ENCODE measurements at regions of chr21 and their contacts with region 1.

Region 1: DNA sequence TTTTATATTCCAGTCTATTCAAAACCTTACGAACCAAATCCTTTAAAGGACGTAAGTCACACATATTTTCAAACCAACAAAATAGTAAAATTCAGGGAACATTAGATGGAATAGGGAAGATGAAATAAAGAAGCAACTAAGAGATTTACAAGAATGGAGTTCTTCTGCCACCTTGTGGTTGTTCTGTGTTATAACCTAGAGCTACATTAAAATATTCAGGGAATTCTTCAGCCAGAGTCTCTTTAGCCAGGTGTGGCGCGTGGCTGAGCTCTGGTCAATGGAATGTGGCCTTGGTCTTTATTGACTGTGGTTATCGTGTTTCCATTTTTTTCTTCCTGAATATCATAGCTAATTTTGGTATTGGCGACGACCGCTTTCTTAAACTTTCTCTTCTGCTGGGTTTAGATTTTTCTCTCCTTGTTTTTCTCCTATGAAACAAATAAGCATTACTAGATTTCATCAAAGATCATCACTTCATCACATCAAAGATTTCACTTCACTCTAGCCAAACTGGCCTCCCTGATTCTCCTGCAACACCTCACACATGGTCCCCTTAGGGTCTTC is 221.3 kb downstream of the MRPL39 start:
- DNase-seq: peak; percentile 59
- H3K4me3 ChIP-seq: no peak overlapping the region
- H3K27ac ChIP-seq: no peak overlapping the region
- H3K4me1 ChIP-seq: no peaks in the 10 kb centered on the region
- H3K27me3 ChIP-seq: no peaks in the 10 kb centered on the region
- CTCF ChIP-seq: peak; percentile 74

Region 2: GRCh38 chr21:23853796-23854379 is 1532.1 kb before region 1 on chr21:
- CTCF ChIA-PET with region 1: no interaction called
- POLR2A ChIA-PET with region 1: no interaction called
- intact Hi-C with region 1: loop called (anchors 10 kb)
- DNase-seq: peak; percentile 2
- H3K4me3 ChIP-seq: no peak overlapping the region
- H3K27ac ChIP-seq: no peak overlapping the region
- H3K4me1 ChIP-seq: no peaks in the 10 kb centered on the region
- H3K27me3 ChIP-seq: no peaks in the 10 kb centered on the region
- CTCF ChIP-seq: peak; percentile 49

Region 3: DNA sequence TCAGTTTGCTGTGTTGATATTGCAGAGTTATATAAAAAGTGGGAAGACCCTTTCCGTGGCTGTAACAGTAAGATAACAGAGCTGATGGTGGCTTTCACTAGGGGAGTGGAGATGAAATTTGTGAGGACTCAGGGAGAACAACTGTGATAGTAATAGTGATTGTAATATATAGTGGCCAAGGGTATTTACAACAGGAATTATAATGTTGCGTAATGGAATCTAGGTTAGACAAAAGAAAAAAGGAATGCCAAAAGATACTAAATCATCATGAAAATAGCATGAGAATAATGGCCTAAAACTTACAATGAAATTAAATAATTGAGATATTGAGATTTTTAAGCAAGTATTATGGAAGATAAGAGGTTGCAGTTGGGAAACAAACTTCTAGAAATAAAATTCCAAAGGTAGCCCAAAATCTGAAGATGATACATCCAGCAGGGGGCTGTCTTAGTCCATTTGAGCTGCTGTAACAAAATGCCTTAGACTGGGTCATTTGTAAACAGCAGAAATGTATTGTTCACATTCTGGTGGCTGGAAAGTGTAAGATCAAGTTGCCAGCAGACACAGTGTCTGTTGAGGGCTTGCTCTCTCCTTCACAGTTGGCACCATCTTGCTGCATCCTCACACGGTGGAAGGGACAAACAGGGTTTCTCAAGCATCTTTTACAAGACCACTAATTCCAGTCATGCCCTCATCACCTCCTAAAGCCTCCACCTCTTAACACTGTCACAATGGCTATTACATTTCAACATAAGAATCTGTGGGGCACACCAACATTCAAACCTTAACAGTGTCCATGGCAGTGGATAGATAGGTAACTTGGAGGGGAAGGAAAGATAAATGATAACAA is 489.9 kb before region 1 on chr21:
- CTCF ChIA-PET with region 1: no interaction called
- POLR2A ChIA-PET with region 1: no interaction called
- intact Hi-C with region 1: loop called (anchors 5 kb)
- DNase-seq: peak; percentile 5
- H3K4me3 ChIP-seq: no peak overlapping the region
- H3K27ac ChIP-seq: no peak overlapping the region
- H3K4me1 ChIP-seq: no peaks in the 10 kb centered on the region
- H3K27me3 ChIP-seq: no peaks in the 10 kb centered on the region
- CTCF ChIP-seq: peak; percentile 36; the same call in 1 of the 2 replicates

Region 4: GRCh38 chr21:24941316-24942185 is 444.4 kb before region 1 on chr21:
- CTCF ChIA-PET with region 1: no interaction called
- POLR2A ChIA-PET with region 1: no interaction called
- intact Hi-C with region 1: no loop called
- DNase-seq: no peak
- H3K4me3 ChIP-seq: no peak overlapping the region
- H3K27ac ChIP-seq: no peak overlapping the region
- H3K4me1 ChIP-seq: no peaks in the 10 kb centered on the region
- H3K27me3 ChIP-seq: no peaks in the 10 kb centered on the region
- CTCF ChIP-seq: no peak

Region 5: DNA sequence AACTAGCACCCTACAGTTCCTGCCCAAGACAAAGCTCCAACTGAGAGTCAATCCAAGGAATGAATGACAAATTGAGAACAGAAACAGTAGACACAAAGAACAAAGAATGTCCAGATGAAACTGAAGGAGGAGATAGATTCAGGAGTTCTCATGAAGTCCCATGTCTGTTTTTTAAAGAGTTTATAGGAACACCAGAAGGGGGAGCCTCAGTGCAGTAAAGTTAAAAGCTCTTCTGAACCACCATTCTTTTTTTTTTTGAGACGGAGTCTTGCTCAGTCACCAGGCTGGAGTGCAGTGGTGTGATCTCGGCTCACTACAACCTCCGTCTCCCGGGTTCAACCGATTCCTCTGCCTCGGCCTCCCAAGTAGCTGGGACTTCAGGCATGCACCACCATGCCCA is 102.3 kb before region 1 on chr21:
- CTCF ChIA-PET with region 1: interaction called, 3 read pairs
- POLR2A ChIA-PET with region 1: no interaction called
- intact Hi-C with region 1: loop called (anchors 1 kb)
- DNase-seq: peak; percentile 51
- H3K4me3 ChIP-seq: no peak overlapping the region
- H3K27ac ChIP-seq: no peak overlapping the region
- H3K4me1 ChIP-seq: no peaks in the 10 kb centered on the region
- H3K27me3 ChIP-seq: no peaks in the 10 kb centered on the region
- CTCF ChIP-seq: peak; percentile 50

Measured in A673 (cell line).